Cardiac septum (tissue), 1 donor: ENCODE measurements at regions of chr3 and their contacts with region 1.

Region 1: GRCh38 chr3:171187706-171188290 is 161.3 kb upstream of the SLC2A2 start:
- DNase-seq: no peak

Region 2: DNA sequence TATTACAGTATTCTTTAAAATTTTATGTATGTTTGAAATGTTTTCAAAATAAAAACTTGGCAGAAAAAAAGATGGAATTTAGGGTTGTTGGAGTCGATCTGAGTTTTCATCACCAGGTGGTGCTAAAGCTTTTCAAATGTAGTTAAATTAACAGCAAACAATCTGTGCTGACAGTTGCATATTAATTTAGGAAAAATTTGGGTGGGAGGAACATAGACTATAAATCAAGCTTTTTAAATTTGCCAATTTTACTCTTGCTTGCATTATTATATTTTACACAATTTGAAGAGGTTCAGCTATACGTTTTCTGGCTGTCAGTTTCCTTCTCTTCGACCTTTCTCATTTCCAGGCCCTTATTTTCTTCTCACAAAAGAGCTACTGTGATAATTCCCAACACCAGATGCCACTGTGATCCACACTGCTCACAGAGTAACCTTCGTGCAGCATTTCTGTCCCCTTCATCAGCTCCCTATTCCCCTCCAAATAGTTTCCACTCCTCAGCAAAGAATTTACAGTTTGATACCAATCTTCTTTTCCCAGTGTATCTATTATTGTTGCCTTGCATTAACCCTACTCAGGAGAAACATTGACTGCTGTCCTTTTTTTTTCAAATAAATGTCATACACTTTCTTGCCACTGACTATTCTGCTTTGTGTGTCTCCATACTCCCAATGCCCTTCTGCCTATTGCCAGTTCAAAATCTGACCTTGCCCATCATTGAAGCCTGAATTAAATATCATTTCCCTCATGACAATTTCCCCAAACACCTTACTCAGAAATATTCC is 226.0 kb before region 1 on chr3:
- intact Hi-C with region 1: loop called (anchors 10 kb)
- DNase-seq: no peak

Region 3: GRCh38 chr3:171320750-171321558 is 133.2 kb after region 1 on chr3:
- intact Hi-C with region 1: loop called (anchors 5 kb)
- DNase-seq: no peak